Activated naive CD4-positive, alpha-beta T cell treated with anti-CD3 and anti-CD28 coated beads for 36 hours (primary cell): ENCODE measurements at regions of chr1 and their contacts with region 1.

Region 1: GRCh38 chr1:231390071-231390470 is 32.0 kb downstream of the EGLN1 start:
- DNase-seq: peak; percentile 54
- H3K4me3 Mint-ChIP-seq: no peak overlapping the region
- H3K27ac Mint-ChIP-seq: peak overlapping the region; percentile 51
- H3K4me1 Mint-ChIP-seq: peaks cover 53% of the 10 kb centered on the region
- H3K27me3 Mint-ChIP-seq: no peaks in the 10 kb centered on the region

Region 2: GRCh38 chr1:231376875-231377549 is 13.1 kb before region 1 on chr1:
- CTCF ChIA-PET with region 1: no interaction called
- intact Hi-C with region 1: loop called (anchors 1 kb)
- DNase-seq: peak; percentile 31
- H3K4me3 Mint-ChIP-seq: no peak overlapping the region
- H3K27ac Mint-ChIP-seq: peak overlapping the region; percentile 24
- H3K4me1 Mint-ChIP-seq: peaks cover 43% of the 10 kb centered on the region
- H3K27me3 Mint-ChIP-seq: no peaks in the 10 kb centered on the region